Endothelial cell of umbilical vein (primary cell): ENCODE measurements at regions of chr4 and their contacts with region 1.

Region 1: DNA sequence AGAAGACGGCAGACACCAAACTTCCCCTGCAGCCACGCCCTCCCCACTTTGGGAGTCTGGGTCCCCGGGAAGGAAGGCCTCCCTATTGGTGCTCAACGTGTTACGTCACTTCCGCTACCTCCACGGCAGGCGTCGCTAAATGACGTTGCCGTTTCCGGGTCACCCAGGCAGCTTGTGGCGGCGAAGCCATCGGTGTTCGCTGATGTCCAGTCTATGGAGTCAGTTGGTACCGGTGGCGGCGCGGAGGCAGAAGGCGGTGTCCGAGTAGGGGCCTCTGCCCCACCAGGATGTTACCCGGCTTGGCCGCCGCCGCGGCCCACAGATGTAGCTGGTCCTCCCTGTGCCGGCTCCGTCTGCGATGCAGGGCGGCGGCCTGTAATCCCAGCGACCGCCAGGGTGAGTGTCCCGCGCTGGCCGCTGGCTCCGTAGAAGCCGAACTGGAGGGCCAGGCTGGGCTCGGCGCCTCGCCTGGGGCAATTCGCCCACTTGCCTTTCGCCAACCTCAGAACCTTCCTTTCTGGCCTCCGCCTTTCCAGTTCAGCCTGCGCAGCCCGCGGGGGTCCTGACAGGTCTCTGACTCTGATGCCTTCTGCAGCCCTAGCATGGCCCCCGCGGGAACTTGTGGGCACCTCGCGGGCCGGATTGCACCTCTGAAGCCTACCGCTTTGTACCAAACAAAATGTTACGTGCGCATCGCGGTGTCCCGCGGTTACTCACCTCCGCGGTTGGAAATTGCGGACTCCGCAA is at the start of gene SLC30A9:
- DNase-seq: peak; percentile 95
- H3K4me3 ChIP-seq: peak within 1 kb of the TSS; percentile 51 to 96 (median 85)
- H3K27ac ChIP-seq: peak within 1 kb of the TSS; percentile 60
- H3K4me1 ChIP-seq: peaks cover 14% of the 10 kb centered on the region
- H3K27me3 ChIP-seq: no peaks in the 10 kb centered on the region
- CTCF ChIP-seq: peak; percentile 19 to 57
- POLR2A ChIP-seq: peak; percentile 90
- total RNA-seq, gene SLC30A9: 40.6 and 44.4 TPM in 2 replicates

Region 2: DNA sequence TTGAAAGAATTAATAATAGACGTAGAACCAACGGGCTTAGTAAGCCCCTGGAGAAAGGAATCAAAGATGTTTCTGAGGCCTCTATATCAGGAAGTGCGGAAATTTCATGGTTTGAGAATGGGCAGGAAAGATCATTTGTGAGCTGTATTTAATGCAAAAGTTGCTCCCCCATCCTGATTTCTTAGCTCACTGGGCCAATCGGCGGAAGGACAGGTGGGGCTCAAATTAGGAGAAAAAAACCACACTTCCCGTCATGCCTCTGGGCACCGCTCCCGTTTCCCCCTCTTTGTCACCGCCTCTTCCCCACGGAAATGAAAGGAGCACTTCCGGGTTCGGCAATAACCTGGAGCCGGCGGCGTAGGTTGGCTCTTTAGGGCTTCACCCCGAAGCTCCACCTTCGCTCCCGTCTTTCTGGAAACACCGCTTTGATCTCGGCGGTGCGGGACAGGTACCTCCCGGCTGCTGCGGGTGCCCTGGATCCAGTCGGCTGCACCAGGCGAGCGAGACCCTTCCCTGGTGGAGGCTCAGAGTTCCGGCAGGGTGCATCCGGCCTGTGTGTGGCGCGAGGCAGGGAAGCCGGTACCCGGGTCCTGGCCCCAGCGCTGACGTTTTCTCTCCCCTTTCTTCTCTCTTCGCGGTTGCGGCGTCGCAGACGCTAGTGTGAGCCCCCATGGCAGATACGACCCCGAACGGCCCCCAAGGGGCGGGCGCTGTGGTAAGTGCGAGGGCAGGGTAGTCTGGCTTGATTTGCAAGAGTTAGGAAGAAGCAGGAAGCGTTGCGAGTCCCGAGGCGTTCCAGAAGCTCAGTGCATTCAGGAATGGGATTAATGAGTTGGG is 55.5 kb before region 1 on chr4 and contains the start of gene TMEM33:
- CTCF ChIA-PET with region 1: no interaction called
- POLR2A ChIA-PET with region 1: no interaction called
- dilution Hi-C with region 1: no loop called
- intact Hi-C with region 1: loop called (anchors 1 kb)
- DNase-seq: peak; percentile 87
- H3K4me3 ChIP-seq: peak within 1 kb of the TSS; percentile 65 to 97 (median 91)
- H3K27ac ChIP-seq: peak within 1 kb of the TSS; percentile 73
- H3K4me1 ChIP-seq: peaks cover 18% of the 10 kb centered on the region
- H3K27me3 ChIP-seq: peaks cover 10 to 29% of the 10 kb centered on the region in 2 experiments
- CTCF ChIP-seq: no peak
- POLR2A ChIP-seq: peak; percentile 74
- total RNA-seq, gene TMEM33: 58.5 and 60.1 TPM in 2 replicates

Region 3: GRCh38 chr4:42089591-42089990 is 99.1 kb after region 1 on chr4:
- CTCF ChIA-PET with region 1: no interaction called
- POLR2A ChIA-PET with region 1: interaction called, 12 read pairs
- dilution Hi-C with region 1: no loop called
- intact Hi-C with region 1: no loop called
- DNase-seq: no peak
- H3K4me3 ChIP-seq: no peak overlapping the region
- H3K27ac ChIP-seq: no peak overlapping the region
- H3K4me1 ChIP-seq: no peaks in the 10 kb centered on the region
- H3K27me3 ChIP-seq: no peaks in the 10 kb centered on the region
- CTCF ChIP-seq: no peak
- POLR2A ChIP-seq: no peak